Heart left ventricle (tissue), 16 donors: ENCODE measurements at regions of chr7 and their contacts with region 1.

Region 1: GRCh38 chr7:148153616-148154284 is 436.8 kb upstream of the C7orf33 start:
- DNase-seq: peak; percentile 78 to 89 (median 81)
- ATAC-seq: peak; percentile 98 to 100 (median 99)
- H3K4me3 ChIP-seq: no peak overlapping the region
- H3K27ac ChIP-seq: peak overlapping the region in 6 of 12 donors; percentile 16 to 59 (median 35)
- H3K4me1 ChIP-seq: peaks cover 0 to 17% (median 6%) of the 10 kb centered on the region in 12 donors
- H3K27me3 ChIP-seq: peaks cover 0 to 6% (median 0%) of the 10 kb centered on the region in 9 donors
- CTCF ChIP-seq: no peak
- POLR2A ChIP-seq: no peak

Region 2: GRCh38 chr7:148230296-148230695 is 76.5 kb after region 1 on chr7:
- intact Hi-C with region 1: loop called in 5 of 10 experiments (anchors 2 to 10 kb)
- DNase-seq: no peak
- ATAC-seq: no peak
- H3K4me3 ChIP-seq: no peak overlapping the region
- H3K27ac ChIP-seq: no peak overlapping the region
- H3K4me1 ChIP-seq: peaks cover 0 to 12% (median 0%) of the 10 kb centered on the region in 12 donors
- H3K27me3 ChIP-seq: peaks cover 0 to 12% (median 0%) of the 10 kb centered on the region in 9 donors
- CTCF ChIP-seq: no peak
- POLR2A ChIP-seq: no peak

Region 3: DNA sequence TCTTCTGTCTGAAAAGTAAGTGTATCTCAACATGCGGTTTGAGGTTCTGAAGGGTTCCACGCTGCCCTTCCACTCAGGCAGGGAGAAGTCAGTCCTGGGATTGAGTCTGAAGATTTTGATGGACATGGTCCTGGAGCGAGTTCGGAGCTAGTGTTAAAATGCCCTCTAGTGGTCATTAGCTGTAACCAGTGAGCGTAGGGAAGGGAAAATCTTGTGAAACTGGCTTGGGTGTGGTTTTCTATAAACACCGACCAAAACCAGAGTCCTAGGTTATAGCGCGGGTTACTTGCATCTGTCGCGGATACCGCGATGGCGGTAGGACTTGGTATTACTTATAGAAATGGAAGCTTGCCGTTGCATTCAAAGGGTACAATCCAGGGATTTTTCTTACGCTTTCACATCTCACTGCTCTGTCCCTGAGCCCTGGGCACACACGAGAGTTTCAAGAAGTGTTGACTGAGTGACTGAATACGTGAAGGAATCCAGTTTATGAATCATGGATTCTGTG is 88.6 kb after region 1 on chr7:
- intact Hi-C with region 1: loop called in 2 of 10 experiments (anchors 2 to 10 kb)
- DNase-seq: no peak
- ATAC-seq: peak; percentile 65 to 82 (median 74)
- H3K4me3 ChIP-seq: peak overlapping the region in 4 of 12 donors; percentile 3 to 32 (median 26)
- H3K27ac ChIP-seq: no peak overlapping the region
- H3K4me1 ChIP-seq: peaks cover 0 to 4% (median 0%) of the 10 kb centered on the region in 12 donors
- H3K27me3 ChIP-seq: peaks cover 0 to 49% (median 0%) of the 10 kb centered on the region in 9 donors
- CTCF ChIP-seq: peak; percentile 69 to 86 (median 78)
- POLR2A ChIP-seq: no peak